Posterior vena cava (tissue), 2 donors: ENCODE measurements at regions of chr2 and their contacts with region 1.

Region 1: GRCh38 chr2:160228106-160228916 is 28.2 kb upstream of the ITGB6 start:
- DNase-seq: no peak

Region 2: DNA sequence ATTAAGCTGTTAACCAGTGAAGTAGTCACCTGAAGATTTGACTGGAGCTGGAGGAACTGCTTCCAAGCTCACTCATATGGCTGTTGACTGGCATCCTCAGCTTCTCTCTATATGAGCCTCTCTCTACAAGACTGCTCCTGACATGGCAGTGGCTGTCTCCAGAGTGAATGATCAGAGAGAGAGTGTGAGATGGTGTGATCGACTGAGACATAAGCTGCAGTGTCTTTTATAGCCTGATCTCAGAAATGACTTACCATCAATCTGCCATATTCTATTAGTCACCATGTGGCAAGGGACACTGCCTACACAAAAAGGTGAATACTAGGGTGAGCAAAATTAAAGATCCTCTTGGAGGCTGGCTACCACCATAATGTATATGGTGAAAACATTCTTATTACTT is 273.1 kb after region 1 on chr2:
- intact Hi-C with region 1: loop called in 1 of 2 experiments (anchors 5 kb)
- DNase-seq: no peak